Pancreas (tissue), 10 donors: ENCODE measurements at regions of chr18 and their contacts with region 1.

Region 1: GRCh38 chr18:4813708-4814107 is 358.6 kb upstream of the DLGAP1 start:
- DNase-seq: no peak
- ATAC-seq: no peak
- H3K4me3 ChIP-seq: no peak overlapping the region
- H3K27ac ChIP-seq: no peak overlapping the region
- H3K4me1 ChIP-seq: no peaks in the 10 kb centered on the region
- H3K27me3 ChIP-seq: no peaks in the 10 kb centered on the region
- CTCF ChIP-seq: no peak

Region 2: DNA sequence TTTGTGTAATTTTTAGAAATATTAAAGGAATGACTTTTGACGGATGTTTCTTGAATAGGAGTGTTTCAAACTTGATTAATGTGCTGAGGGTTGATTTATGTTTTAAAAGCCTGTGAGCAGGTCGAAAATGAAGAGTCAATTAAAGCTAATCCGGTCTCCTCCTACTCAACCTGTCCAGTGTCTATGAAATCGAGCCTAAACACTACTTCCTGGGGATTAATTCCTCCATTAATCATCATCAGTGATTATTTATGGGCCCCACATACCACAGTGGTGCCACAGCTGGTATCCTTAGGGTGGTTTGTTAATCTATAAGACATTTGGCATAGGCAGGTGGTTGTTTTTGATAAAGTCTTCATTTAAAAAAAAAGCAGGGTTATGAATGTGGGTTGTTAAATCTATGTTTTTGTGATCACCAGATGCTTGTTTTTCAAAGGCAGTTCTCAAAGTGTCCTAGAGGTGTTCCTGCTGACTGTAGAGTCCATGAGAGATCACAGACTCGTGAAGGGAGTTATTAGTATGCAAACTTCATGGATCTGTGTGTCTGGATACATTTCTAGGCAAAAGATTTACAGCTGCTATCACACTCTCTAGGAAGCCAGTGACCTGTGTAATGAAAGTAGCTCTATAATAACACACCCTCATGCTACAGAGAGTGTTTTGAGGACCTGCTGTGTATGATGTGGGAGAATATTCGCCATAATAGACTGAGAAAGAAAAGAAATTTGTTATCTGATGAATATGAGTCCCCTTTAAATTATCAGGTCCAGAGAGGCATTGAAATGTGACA is 74.7 kb after region 1 on chr18:
- intact Hi-C with region 1: loop called in 1 of 3 experiments (anchors 10 kb)
- DNase-seq: no peak
- ATAC-seq: no peak
- H3K4me3 ChIP-seq: no peak overlapping the region
- H3K27ac ChIP-seq: no peak overlapping the region
- H3K4me1 ChIP-seq: no peaks in the 10 kb centered on the region
- H3K27me3 ChIP-seq: no peaks in the 10 kb centered on the region
- CTCF ChIP-seq: no peak